ENCODE measurements at regions of chr16 and their contacts with region 1.

Region 1: GRCh38 chr16:53031323-53031942 is 21.3 kb downstream of the CHD9NB start:
- DNase-seq: no peak

Region 2: DNA sequence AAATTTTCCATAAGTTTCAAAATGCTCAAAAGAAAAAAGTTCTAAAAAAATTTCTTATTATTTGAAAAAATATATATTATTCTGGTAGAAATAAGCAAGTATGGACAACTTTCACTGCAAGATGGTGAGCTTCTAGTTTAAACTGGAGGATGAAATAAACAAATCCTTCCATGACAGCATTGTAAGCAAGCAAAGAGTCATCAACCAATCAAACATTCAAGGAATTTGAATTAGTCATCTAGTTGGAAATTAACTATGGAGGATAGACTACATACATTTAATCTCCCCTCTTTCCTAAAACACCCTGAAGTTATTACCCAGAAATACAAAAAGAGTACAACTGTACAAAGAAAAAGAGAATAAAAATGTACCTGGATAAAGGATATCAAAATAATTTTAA is 1848.2 kb after region 1 on chr16:
- intact Hi-C with region 1: loop called in 1 of 2 experiments (anchors 10 kb)
- DNase-seq: no peak

Measured in posterior vena cava (tissue), 2 donors.